Endothelial cell of umbilical vein (primary cell): ENCODE measurements at regions of chr10 and their contacts with region 1.

Region 1: DNA sequence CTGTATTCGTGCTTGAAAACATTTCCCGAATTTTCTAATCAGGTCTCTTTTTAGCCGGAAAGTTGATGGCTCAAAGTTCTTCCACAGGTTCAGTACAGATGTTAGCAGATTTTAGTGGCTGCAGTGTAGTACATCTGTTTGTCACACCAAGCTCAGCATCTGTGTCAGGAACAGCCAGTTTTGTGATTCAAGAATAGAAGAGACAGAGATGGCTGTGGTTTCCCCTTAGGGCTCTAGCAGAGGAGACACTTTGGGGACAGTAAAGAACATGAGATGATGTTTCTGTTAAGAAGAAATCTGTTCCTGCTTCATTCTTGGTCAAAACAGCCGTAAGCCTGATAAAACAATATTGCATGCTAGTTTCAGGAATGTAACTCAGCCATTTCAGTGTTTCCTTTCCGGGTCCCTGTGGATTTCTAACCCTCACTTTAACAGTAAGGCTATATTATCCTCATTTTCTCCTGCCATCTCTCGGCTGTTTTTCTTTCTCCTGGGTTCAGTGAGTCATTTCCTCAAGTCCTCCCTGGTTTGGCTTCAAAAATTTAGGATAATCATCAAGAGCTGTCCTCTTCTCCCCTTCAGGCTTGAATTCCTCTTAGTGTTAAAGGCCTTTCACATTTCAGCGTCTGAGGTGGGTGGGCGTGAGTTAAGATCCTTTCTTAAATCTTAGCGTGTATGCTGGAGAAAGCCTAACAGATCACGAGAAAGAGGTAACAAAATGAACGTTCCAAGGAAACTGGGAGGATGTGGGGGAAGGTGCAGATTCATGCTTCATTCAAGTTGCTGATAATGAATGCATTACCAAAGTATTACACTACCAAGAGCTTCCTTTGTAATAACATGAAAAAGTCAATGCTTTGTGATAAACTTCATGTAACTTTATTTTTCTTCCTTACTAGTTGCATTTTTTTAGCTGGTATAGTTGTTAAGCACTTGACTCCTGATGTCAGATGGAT is 37.1 kb upstream of the BICC1 start:
- DNase-seq: peak; percentile 54
- H3K4me3 ChIP-seq: peak overlapping the region in 1 of 3 experiments; percentile 49
- H3K27ac ChIP-seq: peak overlapping the region; percentile 18
- H3K4me1 ChIP-seq: peaks cover 16% of the 10 kb centered on the region
- H3K27me3 ChIP-seq: no peaks in the 10 kb centered on the region
- CTCF ChIP-seq: no peak
- POLR2A ChIP-seq: no peak

Region 2: GRCh38 chr10:58393317-58393716 is 82.3 kb before region 1 on chr10:
- CTCF ChIA-PET with region 1: no interaction called
- POLR2A ChIA-PET with region 1: no interaction called
- dilution Hi-C with region 1: no loop called
- intact Hi-C with region 1: no loop called
- DNase-seq: peak; percentile 5
- H3K4me3 ChIP-seq: no peak overlapping the region
- H3K27ac ChIP-seq: no peak overlapping the region
- H3K4me1 ChIP-seq: no peaks in the 10 kb centered on the region
- H3K27me3 ChIP-seq: no peaks in the 10 kb centered on the region
- CTCF ChIP-seq: no peak
- POLR2A ChIP-seq: no peak

Region 3: GRCh38 chr10:58453105-58453504 is 22.5 kb before region 1 on chr10:
- CTCF ChIA-PET with region 1: no interaction called
- POLR2A ChIA-PET with region 1: no interaction called
- dilution Hi-C with region 1: no loop called
- intact Hi-C with region 1: no loop called
- DNase-seq: no peak
- H3K4me3 ChIP-seq: no peak overlapping the region
- H3K27ac ChIP-seq: no peak overlapping the region
- H3K4me1 ChIP-seq: no peaks in the 10 kb centered on the region
- H3K27me3 ChIP-seq: peaks cover 0 to 2% of the 10 kb centered on the region in 2 experiments
- CTCF ChIP-seq: no peak
- POLR2A ChIP-seq: no peak

Region 4: DNA sequence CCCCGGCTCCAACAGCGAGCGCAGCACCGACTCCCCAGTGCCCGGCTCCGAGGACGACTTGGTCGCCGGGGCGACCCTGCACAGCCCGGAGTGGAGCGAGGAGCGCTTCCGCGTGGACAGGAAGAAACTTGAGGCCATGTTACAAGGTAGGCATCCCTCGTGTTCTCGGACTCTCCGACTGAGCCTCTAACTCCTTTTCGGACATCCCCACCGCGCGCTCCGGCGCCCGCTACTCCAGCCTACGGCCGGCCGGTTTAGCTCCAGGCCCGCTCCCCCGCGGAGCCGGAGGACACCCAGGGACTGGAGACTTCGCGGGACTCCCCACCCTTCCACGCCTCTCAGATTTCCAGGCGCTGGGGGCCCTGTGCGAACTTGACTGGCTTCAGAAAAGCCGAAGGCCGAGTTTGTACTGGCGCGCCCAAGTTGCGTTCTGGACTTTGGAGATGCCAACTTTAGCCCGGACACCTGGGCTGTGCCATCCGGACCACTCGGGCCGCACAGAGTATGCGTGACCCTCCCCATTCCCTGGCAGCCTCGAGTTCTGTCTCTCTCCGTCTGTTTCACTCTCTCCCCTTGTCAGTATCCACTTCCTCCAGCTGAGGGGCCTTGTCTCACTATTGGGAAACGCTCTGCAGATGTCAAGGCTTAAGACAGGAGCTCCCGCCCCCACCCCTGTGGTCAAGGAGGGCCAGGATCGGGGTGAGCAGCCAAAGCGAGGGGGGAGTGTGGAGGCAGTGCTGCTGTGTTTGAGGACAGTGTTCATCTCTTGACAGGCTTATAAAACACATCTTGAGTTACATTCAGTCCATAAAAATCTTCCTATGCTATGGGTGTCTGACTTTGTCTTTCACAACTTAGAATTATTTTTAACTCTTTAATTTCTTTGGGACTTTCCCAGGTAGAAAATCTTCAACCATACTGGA is 37.8 kb after region 1 on chr10:
- CTCF ChIA-PET with region 1: no interaction called
- POLR2A ChIA-PET with region 1: no interaction called
- dilution Hi-C with region 1: no loop called
- intact Hi-C with region 1: loop called (anchors 2 kb)
- DNase-seq: peak; percentile 7
- H3K4me3 ChIP-seq: peak overlapping the region; percentile 23 to 35 (median 29)
- H3K27ac ChIP-seq: no peak overlapping the region
- H3K4me1 ChIP-seq: peaks cover 10% of the 10 kb centered on the region
- H3K27me3 ChIP-seq: peaks cover 16 to 55% of the 10 kb centered on the region in 2 experiments
- CTCF ChIP-seq: no peak
- POLR2A ChIP-seq: no peak